ENCODE measurements at regions of chr1 and their contacts with region 1.

Region 1: GRCh38 chr1:145891587-145892485 is 6.2 kb upstream of the ANKRD35 start:
- DNase-seq: peak; percentile 97
- ATAC-seq: peak; percentile 97
- H3K4me3 ChIP-seq: peak overlapping the region; percentile 5 to 17; a peak in 3 of 4 replicates
- H3K27ac ChIP-seq: peak overlapping the region; percentile 89
- H3K4me1 ChIP-seq: peaks cover 25% of the 10 kb centered on the region
- H3K27me3 ChIP-seq: no peaks in the 10 kb centered on the region
- CTCF ChIP-seq: peak; percentile 99

Region 2: GRCh38 chr1:145823565-145824498 is 68.0 kb before region 1 on chr1 and contains the starts of genes POLR3C and RNF115:
- CTCF ChIA-PET with region 1: no interaction called
- POLR2A ChIA-PET with region 1: interaction called, 15 read pairs
- in situ Hi-C with region 1: no loop called
- intact Hi-C with region 1: no loop called
- DNase-seq: no peak
- ATAC-seq: peak; percentile 97
- H3K4me3 ChIP-seq: peak within 1 kb of the TSS; percentile 95 to 99
- H3K27ac ChIP-seq: peak within 1 kb of the TSS; percentile 99
- H3K4me1 ChIP-seq: peaks cover 11% of the 10 kb centered on the region; the same call in 1 of the 2 replicates
- H3K27me3 ChIP-seq: no peaks in the 10 kb centered on the region
- CTCF ChIP-seq: no peak
- total RNA-seq, gene POLR3C: 35.1 TPM
- total RNA-seq, gene RNF115: 14.5 TPM

Region 3: DNA sequence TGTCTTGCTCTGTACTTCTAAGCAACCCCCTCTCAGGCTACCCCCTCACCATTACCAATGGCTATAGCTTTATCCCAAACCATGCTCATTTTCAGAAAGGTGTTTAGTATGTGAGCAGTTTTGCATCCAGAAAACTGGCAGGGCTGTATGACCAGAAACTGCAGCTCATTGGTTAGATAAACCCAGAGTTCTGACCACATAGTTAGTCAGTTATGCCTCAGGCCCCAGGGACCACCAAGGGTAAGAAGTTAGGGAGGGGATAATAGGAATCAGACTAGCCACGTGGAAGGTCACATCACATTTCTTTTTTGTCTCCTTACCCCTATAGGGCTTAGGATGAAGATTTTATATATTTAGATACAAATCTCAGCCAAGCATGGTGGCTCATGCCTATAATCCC is 16.8 kb after region 1 on chr1:
- CTCF ChIA-PET with region 1: interaction called, 15 read pairs
- POLR2A ChIA-PET with region 1: no interaction called
- in situ Hi-C with region 1: no loop called
- intact Hi-C with region 1: no loop called
- DNase-seq: no peak
- ATAC-seq: no peak
- H3K4me3 ChIP-seq: no peak overlapping the region
- H3K27ac ChIP-seq: peak overlapping the region; percentile 46
- H3K4me1 ChIP-seq: peaks cover 13% of the 10 kb centered on the region
- H3K27me3 ChIP-seq: no peaks in the 10 kb centered on the region
- CTCF ChIP-seq: no peak

Region 4: DNA sequence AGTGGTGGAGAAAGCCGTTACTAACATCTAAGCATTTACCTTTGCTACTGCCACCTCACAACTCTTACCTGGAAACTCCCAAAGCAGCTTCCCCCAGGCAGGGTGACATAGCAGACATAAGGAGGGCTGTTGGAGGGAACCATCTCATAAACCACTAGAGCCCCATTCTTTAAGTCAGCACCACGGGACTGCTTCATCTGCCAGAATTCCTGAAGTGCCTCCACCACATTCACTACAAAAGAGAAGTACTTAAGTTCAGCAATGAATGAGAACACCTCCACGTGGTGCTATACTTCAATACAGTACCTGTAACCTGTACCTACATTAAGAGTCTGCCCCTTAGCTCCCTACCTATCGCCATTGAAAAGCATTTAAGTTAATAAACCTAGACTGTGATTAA is 55.7 kb after region 1 on chr1:
- CTCF ChIA-PET with region 1: no interaction called
- POLR2A ChIA-PET with region 1: no interaction called
- in situ Hi-C with region 1: no loop called
- intact Hi-C with region 1: no loop called
- DNase-seq: no peak
- ATAC-seq: no peak
- H3K4me3 ChIP-seq: no peak overlapping the region
- H3K27ac ChIP-seq: no peak overlapping the region
- H3K4me1 ChIP-seq: no peaks in the 10 kb centered on the region
- H3K27me3 ChIP-seq: no peaks in the 10 kb centered on the region
- CTCF ChIP-seq: no peak

Region 5: DNA sequence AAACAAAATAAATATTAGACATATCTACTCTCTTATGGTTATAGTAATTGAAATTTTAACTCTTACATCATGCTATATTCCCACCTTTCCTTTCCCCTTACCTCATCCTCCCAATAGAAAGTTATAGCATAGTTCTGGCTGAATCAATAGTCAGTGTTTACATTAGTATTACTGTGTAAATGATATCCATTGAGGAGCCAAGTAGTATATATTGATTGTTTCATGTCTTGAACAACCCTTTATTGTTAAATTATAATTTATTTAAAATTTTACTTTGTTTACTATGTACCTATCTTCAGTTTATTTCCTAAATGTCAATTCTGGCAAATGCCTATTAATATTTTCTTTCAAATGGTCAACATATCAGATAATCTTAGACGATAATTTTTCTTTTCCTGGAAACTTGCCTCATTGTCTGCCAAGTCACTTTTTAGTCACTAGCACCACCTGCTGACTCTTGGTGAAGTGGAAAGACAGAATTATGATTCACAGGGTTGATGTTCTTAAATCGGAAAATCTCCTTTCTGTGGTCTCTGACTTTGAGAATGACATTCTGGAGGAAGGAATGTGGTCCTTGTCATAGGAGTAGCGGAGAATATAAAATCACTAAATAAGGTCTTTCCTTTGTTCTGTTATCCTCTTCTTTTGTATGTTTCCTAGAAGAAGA is 121.0 kb after region 1 on chr1:
- CTCF ChIA-PET with region 1: interaction called, 3 read pairs
- POLR2A ChIA-PET with region 1: no interaction called
- in situ Hi-C with region 1: no loop called
- intact Hi-C with region 1: loop called (anchors 5 kb)
- DNase-seq: peak; percentile 74
- ATAC-seq: peak; percentile 74; the same call in 1 of the 2 replicates
- H3K4me3 ChIP-seq: no peak overlapping the region
- H3K27ac ChIP-seq: no peak overlapping the region
- H3K4me1 ChIP-seq: no peaks in the 10 kb centered on the region
- H3K27me3 ChIP-seq: peaks cover 2% of the 10 kb centered on the region; the same call in 1 of the 2 replicates
- CTCF ChIP-seq: peak; percentile 78; the same call in 1 of the 2 replicates

Measured in Panc1 (cell line).